ENCODE measurements at regions of chr5 and their contacts with region 1.

Region 1: DNA sequence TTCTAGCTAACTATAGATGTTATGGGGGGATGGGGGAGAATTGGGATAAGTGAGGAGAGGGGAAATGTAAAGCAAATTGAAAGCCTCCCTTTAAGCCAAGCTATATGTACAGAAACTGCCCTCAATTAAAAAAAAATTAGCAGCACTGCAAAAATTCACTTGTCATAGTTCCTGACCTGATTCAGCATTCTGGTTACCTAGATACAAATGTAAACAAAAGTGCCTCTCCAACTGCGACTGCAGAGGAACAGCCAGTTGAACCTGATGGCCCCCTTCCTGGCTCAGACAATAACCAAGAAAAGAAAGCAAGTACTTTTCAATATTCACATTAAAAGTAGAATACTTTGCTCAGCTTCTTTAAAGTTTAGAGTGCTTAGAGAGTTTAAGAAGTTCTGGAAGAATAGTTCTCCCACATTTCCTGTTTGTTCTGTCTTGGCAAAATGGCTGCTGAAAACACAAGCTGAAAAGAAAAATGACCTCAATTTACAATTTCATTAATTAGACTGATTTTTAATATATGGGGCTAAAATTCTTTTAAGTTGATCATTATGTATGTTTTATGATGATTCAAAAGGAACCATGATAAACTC is 1.5 kb downstream of the FAM81B start:
- DNase-seq: peak; percentile 67
- H3K4me3 ChIP-seq: no peak overlapping the region
- H3K27ac ChIP-seq: no peak overlapping the region
- H3K4me1 ChIP-seq: peaks cover 6% of the 10 kb centered on the region
- H3K27me3 ChIP-seq: peaks cover 2 to 11% of the 10 kb centered on the region in 2 experiments
- CTCF ChIP-seq: no peak
- POLR2A ChIP-seq: no peak

Region 2: DNA sequence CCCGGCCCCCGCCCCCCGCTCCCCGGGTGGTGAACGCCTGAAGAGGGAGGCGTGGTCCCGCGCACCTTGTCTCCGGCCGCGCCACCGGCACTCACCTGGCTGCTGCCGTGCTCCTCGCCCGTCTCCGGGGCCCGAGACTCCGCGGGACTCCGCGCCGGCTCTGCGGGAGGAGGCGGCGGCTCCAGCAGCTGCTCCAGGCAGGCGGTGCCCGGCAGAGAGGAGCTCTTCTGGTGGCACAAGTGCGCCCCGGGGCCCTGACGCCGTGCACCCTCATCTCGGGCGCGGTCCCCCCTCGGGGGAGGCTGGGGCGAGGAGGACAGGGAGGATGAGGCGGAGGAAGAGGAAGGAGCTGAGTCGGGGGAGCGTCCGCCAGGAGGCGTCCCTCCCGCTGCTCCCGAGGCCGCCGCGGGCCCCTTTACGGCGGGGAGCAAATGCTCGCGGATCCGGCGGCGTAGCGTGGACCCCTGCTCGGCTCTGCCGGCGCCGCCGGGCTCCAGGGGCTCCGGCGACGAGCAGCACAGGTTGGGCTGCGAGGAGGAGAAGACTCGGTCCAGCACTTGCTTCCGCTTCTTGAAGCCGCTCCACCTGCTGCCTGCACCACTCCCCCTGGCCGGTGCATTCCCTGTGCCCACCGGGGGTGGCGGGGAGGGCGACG is 108.8 kb before region 1 on chr5:
- CTCF ChIA-PET with region 1: interaction called, 3 read pairs
- POLR2A ChIA-PET with region 1: no interaction called
- dilution Hi-C with region 1: no loop called
- intact Hi-C with region 1: loop called (anchors 5 kb)
- DNase-seq: peak; percentile 28
- H3K4me3 ChIP-seq: peak overlapping the region; percentile 27 to 55 (median 44)
- H3K27ac ChIP-seq: no peak overlapping the region
- H3K4me1 ChIP-seq: peaks cover 14% of the 10 kb centered on the region
- H3K27me3 ChIP-seq: peaks cover 50 to 77% of the 10 kb centered on the region in 2 experiments
- CTCF ChIP-seq: peak; percentile 38 to 58
- POLR2A ChIP-seq: no peak